ENCODE measurements at regions of chr16 and their contacts with region 1.

Region 1: GRCh38 chr16:74480141-74481029 is 59.1 kb upstream of the CLEC18B start:
- DNase-seq: peak; percentile 86
- H3K4me3 Mint-ChIP-seq: peak overlapping the region; percentile 7
- H3K27ac Mint-ChIP-seq: peak overlapping the region; percentile 28
- H3K4me1 Mint-ChIP-seq: peaks cover 45% of the 10 kb centered on the region
- H3K27me3 Mint-ChIP-seq: no peaks in the 10 kb centered on the region
- CTCF ChIP-seq: no peak

Region 2: GRCh38 chr16:74431516-74431915 is 48.9 kb before region 1 on chr16:
- CTCF ChIA-PET with region 1: no interaction called
- intact Hi-C with region 1: no loop called
- DNase-seq: no peak
- H3K4me3 Mint-ChIP-seq: no peak overlapping the region
- H3K27ac Mint-ChIP-seq: no peak overlapping the region
- H3K4me1 Mint-ChIP-seq: no peaks in the 10 kb centered on the region
- H3K27me3 Mint-ChIP-seq: no peaks in the 10 kb centered on the region
- CTCF ChIP-seq: no peak

Region 3: DNA sequence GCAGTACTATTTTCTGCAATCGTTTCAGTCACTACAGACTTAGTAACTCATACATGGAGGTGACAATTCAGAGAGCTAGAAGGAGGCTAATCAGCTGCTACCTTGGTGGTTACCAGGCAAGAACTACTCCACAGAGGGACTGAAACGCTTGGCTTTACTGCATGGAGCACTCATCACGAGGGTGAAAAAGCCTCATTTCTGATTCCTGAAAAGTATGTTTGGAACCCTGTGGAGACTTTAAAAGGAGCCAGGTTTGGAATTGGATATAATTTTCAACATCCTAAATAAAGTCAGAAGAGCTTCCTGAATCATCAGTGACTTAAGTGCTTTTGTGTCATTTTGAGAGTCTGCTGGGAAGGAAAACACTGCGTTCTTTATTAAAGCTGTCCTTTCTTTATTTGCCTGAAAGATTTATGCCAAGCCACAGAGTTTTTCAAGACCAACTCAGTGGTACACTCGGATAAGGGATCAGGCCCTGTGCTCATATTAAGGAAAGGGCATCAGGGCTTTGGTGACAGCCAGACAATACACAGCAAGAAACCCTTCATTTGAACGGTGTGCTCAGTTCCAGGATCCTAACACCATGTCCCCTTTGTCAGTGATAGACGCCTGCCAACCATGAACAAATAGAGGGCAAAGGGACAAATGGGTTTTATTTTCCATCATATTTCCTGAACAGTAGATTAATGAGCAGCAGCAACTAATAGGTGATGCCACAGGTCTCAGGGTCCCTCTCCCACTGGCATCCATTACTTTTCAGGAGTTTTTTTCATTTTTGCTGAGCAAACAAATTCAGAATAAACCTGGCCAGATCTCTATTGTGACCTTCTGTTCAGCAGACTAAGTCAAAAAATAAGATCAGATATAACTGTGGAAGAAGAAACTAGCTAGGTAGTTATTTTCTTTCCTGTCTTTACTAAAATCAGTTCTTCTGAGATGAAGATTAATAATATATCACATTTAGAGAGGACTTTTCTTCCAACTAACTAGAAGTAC is 21.4 kb after region 1 on chr16:
- CTCF ChIA-PET with region 1: no interaction called
- intact Hi-C with region 1: no loop called
- DNase-seq: no peak
- H3K4me3 Mint-ChIP-seq: no peak overlapping the region
- H3K27ac Mint-ChIP-seq: no peak overlapping the region
- H3K4me1 Mint-ChIP-seq: no peaks in the 10 kb centered on the region
- H3K27me3 Mint-ChIP-seq: no peaks in the 10 kb centered on the region
- CTCF ChIP-seq: no peak

Region 4: GRCh38 chr16:74606521-74607310 is 126.3 kb after region 1 on chr16 and contains the start of gene GLG1:
- CTCF ChIA-PET with region 1: interaction called, 11 read pairs
- intact Hi-C with region 1: loop called (anchors 5 kb)
- DNase-seq: peak; percentile 95
- H3K4me3 Mint-ChIP-seq: peak within 1 kb of the TSS; percentile 94
- H3K27ac Mint-ChIP-seq: peak within 1 kb of the TSS; percentile 92
- H3K4me1 Mint-ChIP-seq: peaks cover 35% of the 10 kb centered on the region
- H3K27me3 Mint-ChIP-seq: no peaks in the 10 kb centered on the region
- CTCF ChIP-seq: no peak
- total RNA-seq, gene GLG1: 130 and 139 TPM in 2 replicates

Region 5: DNA sequence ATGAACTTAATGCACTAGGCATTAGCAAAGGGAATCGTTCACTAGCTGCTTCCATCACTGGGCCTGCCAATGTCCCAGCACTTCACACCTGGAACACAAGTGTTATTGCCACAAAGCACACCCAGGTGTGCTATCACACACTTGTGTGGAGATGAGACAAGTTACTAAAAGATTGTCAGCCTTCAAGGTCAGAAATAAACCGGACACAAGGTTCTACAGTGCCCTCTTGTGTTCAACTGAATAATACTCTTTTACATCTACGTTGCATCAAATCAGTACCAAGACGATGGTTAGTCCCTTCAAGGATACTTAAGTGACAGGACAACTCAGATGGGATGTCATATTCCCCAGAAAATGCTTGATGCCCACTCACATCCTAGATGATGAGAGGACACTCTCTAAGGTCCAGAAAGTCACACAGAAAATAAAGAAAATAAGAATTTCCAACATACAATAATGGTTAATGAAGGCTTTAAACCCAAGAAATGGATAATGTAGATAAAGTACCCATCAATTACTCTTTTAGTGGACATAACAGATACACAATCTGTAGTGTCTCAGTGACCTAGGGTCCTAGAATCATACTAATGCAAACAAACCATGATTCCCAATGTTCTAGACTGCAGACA is 142.9 kb after region 1 on chr16:
- CTCF ChIA-PET with region 1: no interaction called
- intact Hi-C with region 1: loop called (anchors 5 kb)
- DNase-seq: no peak
- H3K4me3 Mint-ChIP-seq: no peak overlapping the region
- H3K27ac Mint-ChIP-seq: no peak overlapping the region
- H3K4me1 Mint-ChIP-seq: peaks cover 2% of the 10 kb centered on the region
- H3K27me3 Mint-ChIP-seq: no peaks in the 10 kb centered on the region
- CTCF ChIP-seq: peak; percentile 59

Measured in Calu3 (cell line).